Dorsolateral prefrontal cortex (tissue), 120 donors: ENCODE measurements at regions of chr3 and their contacts with region 1.

Region 1: GRCh38 chr3:179562591-179563270 is at the start of gene ACTL6A:
- DNase-seq: peak; percentile 96 to 100 (median 99)
- H3K4me3 ChIP-seq: peak within 1 kb of the TSS; percentile 65 to 98 (median 90)
- H3K27ac ChIP-seq: peak within 1 kb of the TSS in 49 of 59 donors; percentile 9 to 88 (median 74)
- H3K27me3 ChIP-seq: no peaks in the 10 kb centered on the region
- CTCF ChIP-seq: peak in 25 of 56 donors; percentile 8 to 57 (median 28)
- total RNA-seq, gene ACTL6A: 4.3 to 34.8 (median 14.3) TPM

Region 2: GRCh38 chr3:179015551-179016020 is 547.1 kb before region 1 on chr3:
- intact Hi-C with region 1: loop called in 1 of 2 experiments (anchors 10 kb)
- DNase-seq: peak in 2 of 10 donors; percentile 31 to 43
- H3K4me3 ChIP-seq: no peak overlapping the region
- H3K27ac ChIP-seq: peak overlapping the region in 3 of 59 donors; percentile 9 to 48 (median 11)
- H3K27me3 ChIP-seq: no peaks in the 10 kb centered on the region
- CTCF ChIP-seq: peak; percentile 78 to 98 (median 92)

Region 3: DNA sequence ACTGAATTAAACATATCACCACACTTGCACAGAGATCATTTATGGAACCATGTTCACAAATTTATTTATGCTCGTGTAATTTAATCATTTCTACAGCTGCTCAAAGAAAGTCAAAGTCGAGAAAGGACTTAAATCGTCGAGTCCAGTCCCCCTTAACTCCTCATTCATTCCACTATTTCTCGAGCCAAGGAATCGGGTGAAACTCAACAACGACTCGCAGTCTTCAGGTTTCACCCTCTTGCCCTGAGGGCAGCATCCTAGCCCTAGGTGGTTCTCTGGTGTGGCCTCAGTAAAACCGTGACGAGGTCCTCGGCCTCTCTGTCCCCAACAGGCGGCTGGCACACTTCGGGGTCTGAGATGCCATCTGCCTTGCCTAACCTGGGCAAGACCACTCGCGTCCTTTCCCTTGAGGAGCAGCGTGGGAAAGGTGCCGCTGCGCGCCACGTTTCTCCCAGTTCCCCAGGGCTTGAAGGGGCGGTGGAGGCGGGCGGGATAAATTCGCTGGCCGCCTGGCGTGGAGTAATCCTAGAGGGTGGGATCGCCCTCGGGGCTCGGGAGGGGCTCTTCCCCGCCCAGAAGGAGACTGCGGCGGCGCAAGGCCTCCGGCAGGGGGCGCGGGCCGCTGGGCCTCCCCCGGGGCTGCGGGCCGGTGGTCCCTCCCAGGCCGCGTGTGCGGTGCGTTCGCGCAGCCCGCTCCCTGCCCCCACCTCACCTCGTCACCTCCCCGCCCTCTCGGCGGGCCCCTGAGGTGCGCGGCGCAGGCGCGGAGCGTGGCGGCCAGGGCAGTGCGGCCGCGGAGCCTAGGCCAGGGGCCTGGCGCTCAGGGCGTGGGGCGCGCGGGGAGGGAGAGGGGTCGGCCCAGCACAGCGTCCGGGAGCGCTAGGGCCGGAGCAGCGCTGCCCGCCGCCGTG is 240.2 kb before region 1 on chr3 and contains the start of gene ZNF639:
- intact Hi-C with region 1: loop called (anchors 1 to 5 kb)
- DNase-seq: peak; percentile 39 to 85 (median 67)
- H3K4me3 ChIP-seq: peak within 1 kb of the TSS; percentile 63 to 98 (median 89)
- H3K27ac ChIP-seq: peak within 1 kb of the TSS; percentile 59 to 98 (median 94)
- H3K27me3 ChIP-seq: no peaks in the 10 kb centered on the region
- CTCF ChIP-seq: peak; percentile 49 to 92 (median 76)
- total RNA-seq, gene ZNF639: 23.7 to 44.6 (median 31.9) TPM

Region 4: GRCh38 chr3:179421500-179421899 is 141.2 kb before region 1 on chr3:
- intact Hi-C with region 1: loop called (anchors 2 to 10 kb)
- DNase-seq: peak in 1 of 10 donors; percentile 42
- H3K4me3 ChIP-seq: no peak overlapping the region
- H3K27ac ChIP-seq: peak overlapping the region in 12 of 59 donors; percentile 0 to 54 (median 21)
- H3K27me3 ChIP-seq: no peaks in the 10 kb centered on the region
- CTCF ChIP-seq: peak in 55 of 56 donors; percentile 14 to 76 (median 49)

Region 5: GRCh38 chr3:179604321-179605078 is 41.8 kb after region 1 on chr3 and contains the starts of genes MRPL47 and NDUFB5:
- intact Hi-C with region 1: loop called (anchors 2 kb)
- DNase-seq: peak; percentile 93 to 98 (median 96)
- H3K4me3 ChIP-seq: peak within 1 kb of the TSS; percentile 57 to 100 (median 87)
- H3K27ac ChIP-seq: peak within 1 kb of the TSS; percentile 66 to 98 (median 89)
- H3K27me3 ChIP-seq: no peaks in the 10 kb centered on the region
- CTCF ChIP-seq: peak in 30 of 56 donors; percentile 6 to 55 (median 29)
- total RNA-seq, gene MRPL47: 15.4 to 40.1 (median 29.3) TPM
- total RNA-seq, gene NDUFB5: 67.8 to 191 (median 127) TPM